ENCODE measurements at regions of chr13 and their contacts with region 1.

Region 1: DNA sequence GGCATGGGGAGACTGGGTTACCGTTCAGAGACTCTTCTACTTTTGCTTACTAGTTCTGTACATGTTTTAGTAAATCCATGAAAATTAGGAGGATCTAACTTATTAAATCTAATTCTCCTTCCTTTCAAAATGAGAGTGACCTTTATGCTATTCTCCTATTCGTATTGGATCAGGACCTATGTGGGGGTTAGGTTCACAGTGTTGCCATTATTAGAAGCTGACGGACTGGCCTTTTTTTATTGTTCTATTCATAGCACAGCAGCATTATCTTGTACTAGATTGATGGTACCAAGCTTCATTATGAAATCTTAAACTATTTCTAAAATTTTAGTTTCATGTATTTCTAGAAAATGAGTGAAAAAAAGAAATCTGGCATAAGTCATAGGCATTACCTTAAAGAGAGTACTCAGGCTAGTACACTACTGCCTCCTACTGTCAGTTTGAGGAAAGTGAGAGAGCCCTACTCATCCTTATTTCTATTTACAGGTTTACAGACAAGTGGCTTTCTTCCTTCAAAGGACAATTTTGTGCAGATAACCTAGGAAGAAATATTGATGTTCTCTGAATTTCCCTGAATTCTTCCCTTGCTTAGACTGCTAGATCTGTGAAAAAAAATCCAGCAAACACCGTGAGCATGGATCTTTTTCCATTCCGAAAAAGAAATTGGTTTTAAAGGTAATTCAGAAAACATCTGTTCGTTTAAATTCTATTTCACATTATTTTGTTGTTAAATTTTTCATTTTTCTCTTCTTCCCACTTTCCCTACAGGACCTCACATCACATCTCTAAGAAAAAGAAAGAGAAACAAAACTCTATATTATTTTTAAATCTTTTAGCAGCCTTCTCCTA is 485.5 kb downstream of the DIAPH3 start:
- DNase-seq: no peak
- ATAC-seq: peak; percentile 84
- H3K4me3 ChIP-seq: no peak overlapping the region
- H3K27ac ChIP-seq: no peak overlapping the region
- H3K4me1 ChIP-seq: no peaks in the 10 kb centered on the region
- H3K27me3 ChIP-seq: no peaks in the 10 kb centered on the region
- CTCF ChIP-seq: peak; percentile 62 to 75 (median 66)
- EP300 ChIP-seq: no peak
- POLR2A ChIP-seq: no peak
- RAD21 ChIP-seq: peak; percentile 85

Region 2: DNA sequence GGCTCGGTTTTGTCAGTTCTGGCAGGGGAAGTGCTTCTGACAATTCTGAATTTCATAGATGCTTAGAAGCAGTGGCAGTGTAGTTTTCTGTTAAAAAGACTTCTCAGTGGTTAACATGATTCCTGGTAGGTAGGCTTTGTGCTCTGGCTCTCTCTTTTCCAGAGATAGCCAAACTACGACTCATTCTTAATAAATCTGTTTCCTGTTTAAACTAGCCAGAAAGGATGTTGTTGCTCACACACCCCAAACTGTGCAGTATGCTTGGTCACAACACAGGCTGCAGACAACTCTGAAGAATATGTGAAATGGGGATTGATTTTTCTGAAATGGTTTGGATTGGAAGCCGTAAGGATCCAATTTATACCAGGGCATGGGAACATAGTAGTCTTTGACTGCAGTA is 1335.1 kb before region 1 on chr13:
- CTCF ChIA-PET with region 1: no interaction called
- POLR2A ChIA-PET with region 1: no interaction called
- RAD21 ChIA-PET with region 1: no interaction called
- SMC1A ChIA-PET with region 1: no interaction called
- in situ Hi-C with region 1: no loop called
- intact Hi-C with region 1: no loop called
- DNase-seq: no peak
- ATAC-seq: no peak
- H3K4me3 ChIP-seq: no peak overlapping the region
- H3K27ac ChIP-seq: no peak overlapping the region
- H3K4me1 ChIP-seq: no peaks in the 10 kb centered on the region
- H3K27me3 ChIP-seq: no peaks in the 10 kb centered on the region
- CTCF ChIP-seq: no peak
- EP300 ChIP-seq: no peak
- POLR2A ChIP-seq: no peak
- RAD21 ChIP-seq: no peak

Region 3: DNA sequence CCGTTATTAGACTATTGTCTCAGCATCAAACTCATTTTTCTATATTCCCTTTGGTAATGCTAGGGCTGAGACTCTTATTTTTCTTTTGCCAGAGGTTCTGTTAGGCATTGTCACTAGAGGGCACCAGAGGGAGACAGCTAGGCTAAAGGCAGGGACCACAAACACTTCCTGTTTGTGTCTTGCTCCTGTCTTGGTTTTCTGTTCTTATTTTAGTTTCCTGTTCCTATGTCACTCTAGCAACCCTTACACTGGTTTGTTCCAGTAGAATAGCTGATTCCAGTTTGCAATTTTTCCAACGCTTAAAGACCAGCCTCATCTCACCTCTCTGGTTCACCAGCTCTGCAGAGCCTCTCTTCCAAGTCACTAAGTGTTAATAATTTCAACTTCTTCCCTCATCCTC is 286.5 kb before region 1 on chr13:
- CTCF ChIA-PET with region 1: interaction called, 89 read pairs
- POLR2A ChIA-PET with region 1: no interaction called
- RAD21 ChIA-PET with region 1: interaction called, 32 read pairs
- SMC1A ChIA-PET with region 1: interaction called, 24 read pairs
- in situ Hi-C with region 1: loop called (anchors 10 kb)
- intact Hi-C with region 1: loop called (anchors 1 kb)
- DNase-seq: peak; percentile 45
- ATAC-seq: peak; percentile 97
- H3K4me3 ChIP-seq: no peak overlapping the region
- H3K27ac ChIP-seq: peak overlapping the region; percentile 38
- H3K4me1 ChIP-seq: no peaks in the 10 kb centered on the region
- H3K27me3 ChIP-seq: no peaks in the 10 kb centered on the region
- CTCF ChIP-seq: peak; percentile 76 to 83 (median 83); a peak in 5 of 6 replicates
- EP300 ChIP-seq: no peak
- POLR2A ChIP-seq: no peak
- RAD21 ChIP-seq: peak; percentile 87

Region 4: DNA sequence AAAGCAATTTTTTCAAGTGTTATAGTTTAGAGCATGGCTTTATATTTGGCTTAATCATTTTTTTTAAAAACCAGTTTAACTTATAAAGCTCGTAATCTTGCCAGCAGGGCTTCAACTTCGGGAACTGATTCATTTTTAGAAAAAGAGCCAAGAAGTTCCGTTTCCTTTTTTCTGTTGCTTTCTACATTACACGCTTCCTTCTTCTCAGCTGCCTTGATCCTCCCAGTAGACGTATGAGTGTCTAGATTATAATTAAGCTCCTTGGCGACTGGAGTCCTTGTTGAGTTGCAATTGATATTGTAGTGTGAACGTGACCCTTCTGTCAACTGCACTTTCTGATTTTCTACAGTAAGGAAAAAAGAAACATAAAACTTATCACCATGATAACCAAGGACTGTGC is 11.7 kb before region 1 on chr13:
- CTCF ChIA-PET with region 1: interaction called, 11 read pairs
- POLR2A ChIA-PET with region 1: no interaction called
- RAD21 ChIA-PET with region 1: interaction called, 3 read pairs
- SMC1A ChIA-PET with region 1: interaction called, 4 read pairs
- in situ Hi-C with region 1: no loop called
- intact Hi-C with region 1: no loop called
- DNase-seq: no peak
- ATAC-seq: peak; percentile 69
- H3K4me3 ChIP-seq: no peak overlapping the region
- H3K27ac ChIP-seq: no peak overlapping the region
- H3K4me1 ChIP-seq: peaks cover 3% of the 10 kb centered on the region; the same call in 1 of the 2 replicates
- H3K27me3 ChIP-seq: no peaks in the 10 kb centered on the region
- CTCF ChIP-seq: no peak
- EP300 ChIP-seq: no peak
- POLR2A ChIP-seq: no peak
- RAD21 ChIP-seq: no peak

Region 5: DNA sequence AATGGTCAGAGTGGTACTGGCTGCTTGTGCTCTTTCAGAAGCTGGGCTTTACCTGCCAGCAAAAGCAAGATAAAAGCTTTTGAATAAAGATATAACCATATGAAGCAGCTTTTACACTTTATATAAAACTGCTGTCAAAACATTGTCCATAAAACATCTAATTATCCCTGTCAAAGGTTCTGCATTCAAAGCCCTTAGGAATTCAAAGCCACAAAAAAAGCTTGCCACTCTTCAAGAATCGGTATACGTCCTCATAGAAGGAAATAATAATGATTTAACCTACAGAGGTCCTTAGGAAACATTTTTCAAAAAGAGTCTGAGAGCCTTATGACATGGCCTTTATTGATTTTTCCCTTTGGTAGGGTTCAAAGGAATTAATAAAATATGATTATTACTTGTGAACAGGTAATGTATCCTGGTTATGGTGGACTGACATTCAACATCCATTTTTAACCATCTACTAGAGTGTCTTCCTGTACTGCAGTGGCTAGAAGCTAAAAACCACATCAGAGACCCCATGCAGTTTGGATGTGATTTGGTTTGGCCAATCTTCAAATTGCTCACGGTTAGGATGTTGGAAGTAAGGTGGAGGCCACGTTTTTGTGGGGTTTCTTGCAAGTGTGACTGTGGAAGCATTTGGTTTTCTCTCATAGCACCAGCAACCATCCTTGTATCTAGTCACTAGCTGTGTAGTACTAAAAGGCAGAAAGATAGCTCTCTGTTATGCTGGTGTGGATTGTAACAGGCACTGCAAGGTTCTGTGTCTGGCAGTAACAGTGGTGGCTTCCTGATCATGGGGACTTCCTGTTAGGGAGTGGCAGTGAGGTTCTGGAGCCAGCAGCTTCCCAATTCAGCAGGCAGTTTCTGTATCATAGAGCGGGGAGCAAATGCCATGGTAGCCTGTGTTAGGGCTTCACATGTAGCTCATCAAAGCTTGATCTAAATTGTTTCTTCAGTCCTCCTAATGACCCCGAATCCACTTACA is 44.0 kb after region 1 on chr13:
- CTCF ChIA-PET with region 1: interaction called, 7 read pairs
- POLR2A ChIA-PET with region 1: no interaction called
- RAD21 ChIA-PET with region 1: no interaction called
- SMC1A ChIA-PET with region 1: interaction called, 12 read pairs
- in situ Hi-C with region 1: no loop called
- intact Hi-C with region 1: no loop called
- DNase-seq: no peak
- ATAC-seq: no peak
- H3K4me3 ChIP-seq: no peak overlapping the region
- H3K27ac ChIP-seq: no peak overlapping the region
- H3K4me1 ChIP-seq: no peaks in the 10 kb centered on the region
- H3K27me3 ChIP-seq: no peaks in the 10 kb centered on the region
- CTCF ChIP-seq: no peak
- EP300 ChIP-seq: no peak
- POLR2A ChIP-seq: no peak
- RAD21 ChIP-seq: no peak

Region 6: DNA sequence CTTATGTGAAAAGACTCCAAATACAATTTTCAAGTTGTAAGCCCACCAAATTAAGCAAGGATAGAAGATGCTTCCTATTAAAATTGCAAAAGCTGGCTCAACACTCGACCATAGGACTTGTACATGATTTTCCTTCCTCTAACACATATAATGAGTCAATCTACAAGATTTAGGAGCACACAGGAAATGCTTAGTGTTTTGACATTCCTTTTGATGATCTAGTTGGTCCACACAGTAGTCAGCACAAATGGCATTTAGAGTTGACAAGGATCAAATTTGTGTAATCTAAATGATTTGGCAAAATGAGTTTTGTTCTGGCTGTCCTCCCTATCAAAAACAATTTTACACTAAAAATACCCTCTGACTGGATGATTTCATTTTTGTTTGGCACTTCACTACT is 145.3 kb after region 1 on chr13:
- CTCF ChIA-PET with region 1: no interaction called
- POLR2A ChIA-PET with region 1: no interaction called
- RAD21 ChIA-PET with region 1: no interaction called
- SMC1A ChIA-PET with region 1: no interaction called
- in situ Hi-C with region 1: no loop called
- intact Hi-C with region 1: no loop called
- DNase-seq: no peak
- ATAC-seq: no peak
- H3K4me3 ChIP-seq: no peak overlapping the region
- H3K27ac ChIP-seq: no peak overlapping the region
- H3K4me1 ChIP-seq: no peaks in the 10 kb centered on the region
- H3K27me3 ChIP-seq: no peaks in the 10 kb centered on the region
- CTCF ChIP-seq: no peak
- EP300 ChIP-seq: no peak
- POLR2A ChIP-seq: no peak
- RAD21 ChIP-seq: no peak

Region 7: DNA sequence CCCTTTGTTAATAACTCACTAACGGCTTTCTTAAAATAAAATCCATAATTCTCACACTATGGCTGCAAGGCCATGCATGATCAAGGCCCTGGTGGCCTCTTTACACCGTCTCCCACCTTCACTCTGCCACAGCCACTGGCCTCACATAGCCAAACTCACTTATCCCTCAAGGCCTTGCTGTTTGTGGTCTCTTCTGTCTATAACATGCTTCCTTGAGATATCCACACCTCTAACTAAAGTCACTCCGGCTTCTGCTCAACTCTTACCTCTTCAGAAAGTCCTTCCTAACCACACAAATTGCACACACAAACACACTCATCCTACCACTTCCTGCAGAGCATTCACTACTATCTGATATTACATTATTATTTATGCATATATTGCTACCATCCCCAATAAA is 223.0 kb after region 1 on chr13:
- CTCF ChIA-PET with region 1: interaction called, 119 read pairs
- POLR2A ChIA-PET with region 1: no interaction called
- RAD21 ChIA-PET with region 1: interaction called, 55 read pairs
- SMC1A ChIA-PET with region 1: interaction called, 62 read pairs
- in situ Hi-C with region 1: loop called (anchors 5 kb)
- intact Hi-C with region 1: loop called (anchors 1 kb)
- DNase-seq: no peak
- ATAC-seq: no peak
- H3K4me3 ChIP-seq: no peak overlapping the region
- H3K27ac ChIP-seq: no peak overlapping the region
- H3K4me1 ChIP-seq: no peaks in the 10 kb centered on the region
- H3K27me3 ChIP-seq: no peaks in the 10 kb centered on the region
- CTCF ChIP-seq: no peak
- EP300 ChIP-seq: no peak
- POLR2A ChIP-seq: no peak
- RAD21 ChIP-seq: no peak

Region 8: DNA sequence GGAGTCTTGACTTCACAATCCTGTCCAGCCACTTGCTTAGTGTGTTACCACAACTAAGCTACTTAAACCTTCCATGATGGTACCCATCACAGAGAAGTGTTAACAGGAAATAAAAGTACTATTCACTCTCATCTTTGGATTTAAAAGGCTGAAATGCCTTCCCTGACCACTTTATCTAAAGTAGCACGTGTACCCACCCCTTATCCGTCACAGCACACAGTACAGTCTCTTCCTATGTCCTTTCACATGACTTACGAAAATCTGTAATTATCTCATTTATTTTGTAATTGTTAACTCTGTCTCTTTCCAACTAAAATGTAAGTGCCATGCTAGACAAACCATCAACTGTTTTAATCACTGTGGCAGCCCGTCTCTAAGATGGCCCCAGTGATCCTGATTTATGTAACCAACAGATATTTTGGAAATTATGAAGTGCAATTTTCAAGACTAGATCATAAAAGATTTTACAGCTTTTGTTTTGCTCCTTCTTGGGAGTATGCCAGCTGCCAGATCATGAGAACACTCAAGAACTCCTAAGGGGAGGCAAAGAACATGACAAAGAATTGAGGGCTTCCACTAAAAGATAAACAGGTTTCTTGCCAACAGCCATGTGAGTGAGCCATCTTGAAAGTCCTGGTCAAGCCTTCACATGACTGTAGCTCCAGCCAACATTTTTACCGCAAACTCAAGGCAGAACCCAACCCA is 440.7 kb after region 1 on chr13:
- CTCF ChIA-PET with region 1: no interaction called
- POLR2A ChIA-PET with region 1: no interaction called
- RAD21 ChIA-PET with region 1: no interaction called
- SMC1A ChIA-PET with region 1: no interaction called
- in situ Hi-C with region 1: no loop called
- intact Hi-C with region 1: no loop called
- DNase-seq: no peak
- ATAC-seq: no peak
- H3K4me3 ChIP-seq: no peak overlapping the region
- H3K27ac ChIP-seq: no peak overlapping the region
- H3K4me1 ChIP-seq: no peaks in the 10 kb centered on the region
- H3K27me3 ChIP-seq: no peaks in the 10 kb centered on the region
- CTCF ChIP-seq: no peak
- EP300 ChIP-seq: no peak
- POLR2A ChIP-seq: no peak
- RAD21 ChIP-seq: no peak

Region 9: GRCh38 chr13:60226507-60226906 is 548.3 kb after region 1 on chr13:
- CTCF ChIA-PET with region 1: interaction called, 15 read pairs
- POLR2A ChIA-PET with region 1: no interaction called
- RAD21 ChIA-PET with region 1: interaction called, 3 read pairs
- SMC1A ChIA-PET with region 1: no interaction called
- in situ Hi-C with region 1: no loop called
- intact Hi-C with region 1: no loop called
- DNase-seq: no peak
- ATAC-seq: peak; percentile 59
- H3K4me3 ChIP-seq: no peak overlapping the region
- H3K27ac ChIP-seq: no peak overlapping the region
- H3K4me1 ChIP-seq: no peaks in the 10 kb centered on the region
- H3K27me3 ChIP-seq: no peaks in the 10 kb centered on the region
- CTCF ChIP-seq: peak in 2 of 3 experiments; percentile 12 to 34; a peak in 2 of 6 replicates
- EP300 ChIP-seq: no peak
- POLR2A ChIP-seq: no peak
- RAD21 ChIP-seq: peak; percentile 58

Region 10: GRCh38 chr13:60335531-60335930 is 657.3 kb after region 1 on chr13:
- CTCF ChIA-PET with region 1: interaction called, 13 read pairs
- POLR2A ChIA-PET with region 1: no interaction called
- RAD21 ChIA-PET with region 1: interaction called, 6 read pairs
- SMC1A ChIA-PET with region 1: no interaction called
- in situ Hi-C with region 1: no loop called
- intact Hi-C with region 1: no loop called
- DNase-seq: no peak
- ATAC-seq: no peak
- H3K4me3 ChIP-seq: no peak overlapping the region
- H3K27ac ChIP-seq: no peak overlapping the region
- H3K4me1 ChIP-seq: no peaks in the 10 kb centered on the region
- H3K27me3 ChIP-seq: no peaks in the 10 kb centered on the region
- CTCF ChIP-seq: peak in 2 of 3 experiments; percentile 23 to 47; a peak in 4 of 6 replicates
- EP300 ChIP-seq: no peak
- POLR2A ChIP-seq: no peak
- RAD21 ChIP-seq: peak; percentile 56

Measured in GM12878 (cell line).